GM12878 (cell line): ENCODE measurements at regions of chr3 and their contacts with region 1.

Region 1: DNA sequence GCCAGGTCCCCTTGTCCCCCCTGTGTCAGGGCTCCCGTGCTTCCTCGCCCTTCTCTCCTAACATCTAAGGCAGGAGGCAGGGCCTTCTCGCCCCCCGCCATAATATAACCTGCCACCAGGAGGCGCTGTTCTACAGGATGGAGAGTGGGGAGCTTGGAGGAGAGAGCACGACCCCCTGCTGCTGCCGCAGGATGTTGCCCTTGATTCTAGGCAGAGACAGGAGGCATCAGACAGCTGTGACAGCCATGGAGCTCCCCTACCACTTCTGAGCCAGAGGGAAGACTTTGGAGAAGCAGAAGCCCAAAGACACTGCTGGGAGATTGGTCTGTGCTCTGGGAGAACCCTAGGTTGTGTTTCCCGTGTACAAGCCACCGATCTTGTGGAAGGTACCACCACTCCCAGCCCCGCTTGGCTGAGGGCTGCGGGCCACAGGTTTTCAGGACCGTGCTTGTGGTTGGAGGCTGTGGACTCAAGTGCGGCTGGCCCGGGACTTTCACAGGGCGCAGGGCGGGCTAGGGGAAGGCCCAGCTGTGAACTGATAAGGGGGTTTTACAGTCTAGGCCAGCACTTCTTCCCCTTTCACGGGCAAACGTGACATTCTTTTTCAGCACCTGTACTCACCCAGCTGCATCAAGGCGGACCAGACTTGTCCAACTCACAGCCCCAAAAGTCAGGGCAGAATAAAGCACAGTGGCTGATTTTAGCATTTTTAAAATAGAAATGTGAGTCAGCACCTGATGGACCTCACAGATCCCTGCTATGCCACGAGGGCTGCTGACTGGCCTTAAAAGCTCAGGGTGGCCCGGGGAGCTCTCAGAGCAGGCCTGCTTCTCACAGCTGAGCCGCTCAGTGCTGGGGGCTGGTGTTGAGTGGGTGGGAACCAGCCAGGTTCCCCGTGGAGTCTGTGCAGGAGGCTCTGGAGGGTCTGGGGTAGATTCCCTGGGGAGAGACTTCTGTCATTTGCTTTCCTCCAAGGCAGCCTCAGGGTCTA is 2.6 kb upstream of the TIGIT start:
- DNase-seq: peak; percentile 79
- ATAC-seq: peak; percentile 95
- H3K4me3 ChIP-seq: no peak overlapping the region
- H3K27ac ChIP-seq: peak overlapping the region; percentile 88
- H3K4me1 ChIP-seq: peaks cover 18% of the 10 kb centered on the region
- H3K27me3 ChIP-seq: no peaks in the 10 kb centered on the region
- CTCF ChIP-seq: peak; percentile 92 to 93 (median 93)
- EP300 ChIP-seq: peak; percentile 60 to 79; a peak in 2 of 4 replicates
- POLR2A ChIP-seq: peak; percentile 55
- RAD21 ChIP-seq: peak; percentile 97

Region 2: DNA sequence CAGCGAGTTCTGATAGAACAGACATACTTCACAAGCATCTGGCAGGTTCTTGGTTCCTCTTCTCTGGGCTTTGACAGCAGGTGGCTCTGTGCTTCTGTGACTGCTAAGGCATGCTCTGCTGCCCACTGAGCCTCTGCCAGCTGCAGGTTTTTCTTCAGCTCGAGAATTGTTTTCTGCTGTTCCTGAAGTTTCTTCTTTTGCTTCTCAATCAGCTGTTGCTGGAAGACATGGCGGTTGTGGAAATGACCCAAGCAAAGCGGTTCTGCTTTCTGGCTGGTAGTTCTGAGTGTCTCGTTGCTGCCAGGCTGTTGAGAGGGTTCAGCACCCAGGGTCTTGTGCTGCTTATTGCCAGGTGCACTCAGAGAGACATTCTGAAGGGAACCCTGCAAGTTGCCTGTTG is 285.7 kb before region 1 on chr3:
- CTCF ChIA-PET with region 1: no interaction called
- POLR2A ChIA-PET with region 1: no interaction called
- RAD21 ChIA-PET with region 1: no interaction called
- SMC1A ChIA-PET with region 1: no interaction called
- in situ Hi-C with region 1: no loop called
- intact Hi-C with region 1: no loop called
- DNase-seq: peak; percentile 35
- ATAC-seq: peak; percentile 94
- H3K4me3 ChIP-seq: no peak overlapping the region
- H3K27ac ChIP-seq: no peak overlapping the region
- H3K4me1 ChIP-seq: no peaks in the 10 kb centered on the region
- H3K27me3 ChIP-seq: no peaks in the 10 kb centered on the region
- CTCF ChIP-seq: peak; percentile 7 to 21 (median 9); a peak in 4 of 6 replicates
- EP300 ChIP-seq: no peak
- POLR2A ChIP-seq: no peak
- RAD21 ChIP-seq: 0 out of 2 replicates have a peak, but pooled peaks have one; percentile 12

Region 3: GRCh38 chr3:114152519-114153151 is 138.6 kb before region 1 on chr3:
- CTCF ChIA-PET with region 1: interaction called, 8 read pairs
- POLR2A ChIA-PET with region 1: no interaction called
- RAD21 ChIA-PET with region 1: interaction called, 6 read pairs
- SMC1A ChIA-PET with region 1: interaction called, 13 read pairs
- in situ Hi-C with region 1: no loop called
- intact Hi-C with region 1: loop called (anchors 1 kb)
- DNase-seq: peak; percentile 33
- ATAC-seq: peak; percentile 94
- H3K4me3 ChIP-seq: peak overlapping the region; percentile 45; the same call in 1 of the 2 replicates
- H3K27ac ChIP-seq: no peak overlapping the region
- H3K4me1 ChIP-seq: no peaks in the 10 kb centered on the region; the same call in 1 of the 2 replicates
- H3K27me3 ChIP-seq: 0 out of 4 replicates have a peak, but pooled peaks cover 0 to 1% of the 10 kb centered on the region in 2 experiments
- CTCF ChIP-seq: peak; percentile 86 to 95 (median 94)
- EP300 ChIP-seq: 0 out of 4 replicates have a peak, but pooled peaks of 1 of the 2 experiments have one; percentile 3
- POLR2A ChIP-seq: no peak
- RAD21 ChIP-seq: peak; percentile 93

Region 4: GRCh38 chr3:114319453-114319852 is 28.2 kb after region 1 on chr3:
- CTCF ChIA-PET with region 1: interaction called, 45 read pairs
- POLR2A ChIA-PET with region 1: interaction called, 11 read pairs
- RAD21 ChIA-PET with region 1: interaction called, 80 read pairs
- SMC1A ChIA-PET with region 1: interaction called, 50 read pairs
- in situ Hi-C with region 1: no loop called
- intact Hi-C with region 1: no loop called
- DNase-seq: no peak
- ATAC-seq: no peak
- H3K4me3 ChIP-seq: no peak overlapping the region
- H3K27ac ChIP-seq: no peak overlapping the region
- H3K4me1 ChIP-seq: peaks cover 10% of the 10 kb centered on the region
- H3K27me3 ChIP-seq: no peaks in the 10 kb centered on the region
- CTCF ChIP-seq: no peak
- EP300 ChIP-seq: no peak
- POLR2A ChIP-seq: no peak
- RAD21 ChIP-seq: no peak

Region 5: GRCh38 chr3:114351123-114351821 is 60.1 kb after region 1 on chr3:
- CTCF ChIA-PET with region 1: interaction called, 17 read pairs
- POLR2A ChIA-PET with region 1: no interaction called
- RAD21 ChIA-PET with region 1: interaction called, 3 read pairs
- SMC1A ChIA-PET with region 1: interaction called, 6 read pairs
- in situ Hi-C with region 1: no loop called
- intact Hi-C with region 1: no loop called
- DNase-seq: no peak
- ATAC-seq: no peak
- H3K4me3 ChIP-seq: no peak overlapping the region
- H3K27ac ChIP-seq: no peak overlapping the region
- H3K4me1 ChIP-seq: no peaks in the 10 kb centered on the region
- H3K27me3 ChIP-seq: no peaks in the 10 kb centered on the region
- CTCF ChIP-seq: no peak
- EP300 ChIP-seq: no peak
- POLR2A ChIP-seq: no peak
- RAD21 ChIP-seq: no peak

Region 6: GRCh38 chr3:114383875-114384557 is 92.8 kb after region 1 on chr3:
- CTCF ChIA-PET with region 1: interaction called, 48 read pairs
- POLR2A ChIA-PET with region 1: no interaction called
- RAD21 ChIA-PET with region 1: interaction called, 15 read pairs
- SMC1A ChIA-PET with region 1: interaction called, 19 read pairs
- in situ Hi-C with region 1: no loop called
- intact Hi-C with region 1: loop called (anchors 1 kb)
- DNase-seq: peak; percentile 25
- ATAC-seq: peak; percentile 99
- H3K4me3 ChIP-seq: no peak overlapping the region
- H3K27ac ChIP-seq: no peak overlapping the region
- H3K4me1 ChIP-seq: 0 out of 2 replicates have a peak, but pooled peaks cover under 1% of the 10 kb centered on the region
- H3K27me3 ChIP-seq: no peaks in the 10 kb centered on the region
- CTCF ChIP-seq: peak; percentile 93 to 95 (median 93)
- EP300 ChIP-seq: no peak
- POLR2A ChIP-seq: no peak
- RAD21 ChIP-seq: peak; percentile 98

Region 7: DNA sequence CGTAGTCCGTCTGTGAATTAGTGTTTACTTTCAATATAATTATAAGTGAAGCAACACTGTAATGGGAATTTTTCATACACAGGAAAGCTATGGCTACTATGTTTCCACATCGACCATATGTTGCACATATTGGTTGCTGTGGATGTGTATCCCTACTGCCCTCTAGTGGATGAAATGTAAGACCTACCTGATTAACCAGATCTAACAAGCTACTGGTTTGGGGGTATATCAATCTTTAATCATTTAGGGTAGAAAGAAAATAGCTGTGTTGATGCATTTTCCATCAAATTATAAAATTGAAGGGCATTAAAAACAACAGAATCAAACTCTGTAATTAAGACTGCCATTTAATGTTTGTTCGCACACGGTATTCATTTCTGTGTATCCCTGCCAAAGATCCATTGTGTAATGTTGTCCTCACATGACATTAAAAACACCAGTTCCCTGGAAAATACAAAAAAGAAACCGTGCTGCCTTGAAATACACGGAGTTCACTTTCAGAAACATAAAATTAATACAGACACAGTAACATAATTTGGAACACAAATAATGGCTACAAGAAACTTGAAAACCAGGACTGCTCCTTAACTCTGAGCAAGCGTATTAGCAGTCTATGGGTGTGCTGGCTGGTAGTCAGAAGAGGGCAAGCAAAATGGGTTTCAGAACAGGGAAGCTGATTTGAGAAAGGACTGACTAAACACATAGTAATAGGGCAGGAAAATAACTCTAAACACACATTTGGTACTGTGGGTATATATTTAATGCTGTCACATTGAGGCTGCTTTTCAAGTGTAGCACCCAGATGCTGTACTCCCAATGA is 127.7 kb after region 1 on chr3:
- CTCF ChIA-PET with region 1: interaction called, 131 read pairs
- POLR2A ChIA-PET with region 1: interaction called, 4 read pairs
- RAD21 ChIA-PET with region 1: interaction called, 72 read pairs
- SMC1A ChIA-PET with region 1: interaction called, 110 read pairs
- in situ Hi-C with region 1: loop called (anchors 5 kb)
- intact Hi-C with region 1: loop called (anchors 2 kb)
- DNase-seq: no peak
- ATAC-seq: peak; percentile 96
- H3K4me3 ChIP-seq: no peak overlapping the region
- H3K27ac ChIP-seq: no peak overlapping the region; the same call in 1 of the 2 replicates
- H3K4me1 ChIP-seq: peaks cover 9% of the 10 kb centered on the region
- H3K27me3 ChIP-seq: no peaks in the 10 kb centered on the region
- CTCF ChIP-seq: peak; percentile 68 to 76 (median 75)
- EP300 ChIP-seq: no peak
- POLR2A ChIP-seq: no peak
- RAD21 ChIP-seq: peak; percentile 86